ENCODE measurements at regions of chr2 and their contacts with region 1.

Region 1: GRCh38 chr2:41782306-41783158 is 265.3 kb upstream of the PKDCC start:
- DNase-seq: no peak
- ATAC-seq: no peak
- H3K4me3 ChIP-seq: no peak overlapping the region
- H3K27ac ChIP-seq: no peak overlapping the region
- H3K4me1 ChIP-seq: peaks cover 0 to 2% of the 10 kb centered on the region in 2 donors
- H3K27me3 ChIP-seq: no peaks in the 10 kb centered on the region

Region 2: GRCh38 chr2:39913648-39914461 is 1868.7 kb before region 1 on chr2:
- intact Hi-C with region 1: loop called in 1 of 2 experiments (anchors 5 kb)
- DNase-seq: no peak
- ATAC-seq: no peak
- H3K4me3 ChIP-seq: no peak overlapping the region
- H3K27ac ChIP-seq: no peak overlapping the region
- H3K4me1 ChIP-seq: no peaks in the 10 kb centered on the region
- H3K27me3 ChIP-seq: no peaks in the 10 kb centered on the region

Region 3: GRCh38 chr2:41414486-41415230 is 367.9 kb before region 1 on chr2:
- intact Hi-C with region 1: loop called (anchors 5 to 10 kb)
- DNase-seq: no peak
- ATAC-seq: no peak
- H3K4me3 ChIP-seq: no peak overlapping the region
- H3K27ac ChIP-seq: no peak overlapping the region
- H3K4me1 ChIP-seq: peaks cover 0 to 1% of the 10 kb centered on the region in 2 donors
- H3K27me3 ChIP-seq: no peaks in the 10 kb centered on the region

Region 4: DNA sequence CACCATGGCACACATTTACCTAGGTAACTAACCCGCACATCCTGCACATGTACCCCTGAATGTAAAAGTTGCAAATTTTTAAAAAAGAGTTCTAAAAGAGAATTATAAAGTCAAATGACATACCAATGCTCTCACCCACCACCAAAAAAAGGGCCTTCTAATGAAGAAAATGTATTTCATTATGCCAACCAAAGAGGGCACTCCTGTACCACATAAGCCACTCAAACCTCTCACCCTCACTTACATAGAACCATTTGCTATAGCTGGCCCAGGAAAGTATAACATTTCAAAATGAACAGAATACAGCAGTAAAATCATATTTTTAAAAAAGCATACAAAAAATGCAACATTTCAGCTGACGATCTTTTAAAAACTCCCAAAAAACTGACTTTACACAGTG is 23.8 kb after region 1 on chr2:
- intact Hi-C with region 1: no loop called
- DNase-seq: no peak
- ATAC-seq: no peak
- H3K4me3 ChIP-seq: no peak overlapping the region
- H3K27ac ChIP-seq: no peak overlapping the region
- H3K4me1 ChIP-seq: no peaks in the 10 kb centered on the region
- H3K27me3 ChIP-seq: no peaks in the 10 kb centered on the region

Measured in aorta (tissue), 5 donors.